Astrocyte of the cerebellum (primary cell): ENCODE measurements at regions of chr7 and their contacts with region 1.

Region 1: GRCh38 chr7:125253452-125254182 is 324.0 kb upstream of the POT1 start:
- DNase-seq: no peak
- H3K4me3 ChIP-seq: no peak overlapping the region
- CTCF ChIP-seq: no peak

Region 2: GRCh38 chr7:125195156-125195555 is 58.5 kb before region 1 on chr7:
- in situ Hi-C with region 1: no loop called
- DNase-seq: no peak
- H3K4me3 ChIP-seq: no peak overlapping the region
- CTCF ChIP-seq: no peak

Region 3: GRCh38 chr7:125218076-125218475 is 35.5 kb before region 1 on chr7:
- in situ Hi-C with region 1: loop called (anchors 5 kb)
- DNase-seq: no peak
- H3K4me3 ChIP-seq: no peak overlapping the region
- CTCF ChIP-seq: no peak